Activated T-helper 2 cell treated with anti-CD3 and anti-CD28 coated beads, Interferon-gamma antibody, Interleukin-2, Interleukin-4, amounts not matched to agents 10 μg/mL and 5 μg/mL and 100 μg/mL, durations not matched to agents 14 hours and 24 hours and 36 hours (primary cell): ENCODE measurements at regions of chr14 and their contacts with region 1.

Region 1: DNA sequence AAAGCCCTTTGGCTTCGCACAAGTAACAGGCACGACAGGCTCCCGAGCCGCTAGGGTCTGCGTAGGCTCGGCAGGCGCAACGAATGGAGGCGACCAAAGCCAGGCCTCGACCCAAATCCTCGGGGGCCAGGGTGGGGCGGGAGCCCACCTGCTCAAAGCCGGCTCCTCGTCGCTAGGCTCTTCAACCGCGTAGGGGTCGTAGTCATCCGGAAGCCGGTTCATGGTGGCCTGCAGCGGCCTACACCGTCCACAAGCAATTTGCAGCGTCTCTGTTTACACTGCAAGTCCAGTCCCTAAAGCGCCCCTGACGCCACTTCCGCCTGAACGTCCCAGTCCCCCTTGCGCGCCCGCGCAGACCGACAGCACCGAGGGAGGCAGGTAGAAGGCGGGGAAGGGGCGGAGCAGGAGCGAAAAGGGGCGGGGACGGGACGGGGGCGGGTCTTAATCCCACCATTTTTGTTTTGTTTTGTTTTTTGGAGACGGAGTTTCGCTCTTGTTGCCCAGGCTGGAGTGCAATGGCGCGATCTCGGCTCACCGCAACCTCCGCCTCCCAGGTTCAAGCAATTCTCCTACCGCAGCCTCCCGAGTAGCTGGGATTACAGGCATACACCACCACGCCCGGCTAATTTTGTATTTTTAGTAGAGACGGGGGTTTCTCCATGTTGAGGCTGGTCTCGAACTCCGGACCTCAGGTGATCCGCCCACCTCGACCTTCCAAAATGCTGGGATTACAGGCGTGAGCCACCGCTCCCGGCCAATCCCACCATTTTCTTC is at the start of gene EAPP:
- DNase-seq: peak; percentile 92
- H3K4me3 Mint-ChIP-seq: peak within 1 kb of the TSS; percentile 99
- H3K27ac Mint-ChIP-seq: peak within 1 kb of the TSS; percentile 99
- H3K4me1 Mint-ChIP-seq: peaks cover 24% of the 10 kb centered on the region
- H3K27me3 Mint-ChIP-seq: no peaks in the 10 kb centered on the region
- total RNA-seq, gene EAPP: 35.2 and 36.6 TPM in 2 replicates

Region 2: DNA sequence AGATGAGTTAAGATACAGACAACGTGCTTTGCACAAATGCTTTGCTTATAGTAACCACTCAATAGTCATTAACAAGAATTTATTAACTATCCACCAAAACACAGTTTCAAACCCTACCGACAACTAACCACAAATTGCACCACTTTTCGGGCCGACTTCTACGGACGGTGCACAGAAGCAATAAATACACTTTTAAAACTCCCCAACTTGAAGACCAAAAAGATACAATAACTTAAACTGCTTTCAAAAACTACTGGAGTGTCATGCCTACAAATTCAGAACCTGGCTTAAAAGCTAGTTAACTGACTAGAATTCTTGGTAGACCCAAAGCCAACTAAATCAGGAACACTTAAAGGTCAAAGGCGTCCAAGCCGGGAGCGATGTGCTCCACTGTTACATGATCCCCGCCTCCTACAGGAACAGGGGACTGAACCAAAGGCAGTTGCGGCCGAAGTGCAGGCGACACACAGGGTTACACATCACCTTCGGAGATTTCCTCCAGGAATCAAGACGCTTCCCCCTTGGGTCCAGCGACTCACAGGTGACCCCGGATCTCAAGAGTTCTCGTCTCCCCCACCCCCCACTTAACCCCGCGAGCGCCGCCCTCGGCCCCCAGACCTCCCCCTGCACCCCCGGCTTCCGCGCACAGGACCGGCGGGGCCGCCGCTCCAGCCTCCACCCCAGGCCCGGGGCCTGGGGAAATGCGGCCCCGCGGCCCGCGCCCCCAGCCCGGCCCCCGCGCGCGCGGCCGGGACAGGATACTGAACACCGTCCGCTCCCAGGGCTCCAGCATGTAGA is 78.1 kb before region 1 on chr14:
- intact Hi-C with region 1: loop called (anchors 5 kb)
- DNase-seq: no peak
- H3K4me3 Mint-ChIP-seq: peak overlapping the region; percentile 87
- H3K27ac Mint-ChIP-seq: peak overlapping the region; percentile 90
- H3K4me1 Mint-ChIP-seq: peaks cover 14% of the 10 kb centered on the region
- H3K27me3 Mint-ChIP-seq: no peaks in the 10 kb centered on the region

Region 3: DNA sequence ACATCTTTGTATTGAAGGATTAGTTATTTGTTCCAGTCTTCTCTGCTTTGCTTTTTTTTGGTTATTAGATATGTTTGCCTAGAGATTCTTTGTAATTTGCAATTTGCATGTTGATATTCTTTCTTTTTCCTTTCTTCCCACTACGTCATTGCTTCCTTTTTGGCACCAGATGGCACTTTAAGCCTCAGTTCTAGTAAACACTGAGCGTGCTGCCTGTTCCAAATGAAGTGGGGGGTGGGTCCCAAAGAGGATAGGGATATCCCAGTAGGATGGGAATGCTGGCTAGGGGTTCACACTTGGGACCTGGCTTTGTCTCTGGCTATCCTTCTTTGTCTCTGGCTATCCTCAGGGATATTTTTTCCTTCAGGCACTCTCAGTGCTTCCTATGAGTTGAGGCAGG is 17.1 kb before region 1 on chr14:
- intact Hi-C with region 1: no loop called
- DNase-seq: no peak
- H3K4me3 Mint-ChIP-seq: no peak overlapping the region
- H3K27ac Mint-ChIP-seq: no peak overlapping the region
- H3K4me1 Mint-ChIP-seq: no peaks in the 10 kb centered on the region
- H3K27me3 Mint-ChIP-seq: no peaks in the 10 kb centered on the region

Region 4: GRCh38 chr14:34711169-34711568 is 171.6 kb after region 1 on chr14:
- intact Hi-C with region 1: no loop called
- DNase-seq: no peak
- H3K4me3 Mint-ChIP-seq: no peak overlapping the region
- H3K27ac Mint-ChIP-seq: no peak overlapping the region
- H3K4me1 Mint-ChIP-seq: peaks cover 25% of the 10 kb centered on the region
- H3K27me3 Mint-ChIP-seq: no peaks in the 10 kb centered on the region